ENCODE measurements at regions of chr9 and their contacts with region 1.

Region 1: DNA sequence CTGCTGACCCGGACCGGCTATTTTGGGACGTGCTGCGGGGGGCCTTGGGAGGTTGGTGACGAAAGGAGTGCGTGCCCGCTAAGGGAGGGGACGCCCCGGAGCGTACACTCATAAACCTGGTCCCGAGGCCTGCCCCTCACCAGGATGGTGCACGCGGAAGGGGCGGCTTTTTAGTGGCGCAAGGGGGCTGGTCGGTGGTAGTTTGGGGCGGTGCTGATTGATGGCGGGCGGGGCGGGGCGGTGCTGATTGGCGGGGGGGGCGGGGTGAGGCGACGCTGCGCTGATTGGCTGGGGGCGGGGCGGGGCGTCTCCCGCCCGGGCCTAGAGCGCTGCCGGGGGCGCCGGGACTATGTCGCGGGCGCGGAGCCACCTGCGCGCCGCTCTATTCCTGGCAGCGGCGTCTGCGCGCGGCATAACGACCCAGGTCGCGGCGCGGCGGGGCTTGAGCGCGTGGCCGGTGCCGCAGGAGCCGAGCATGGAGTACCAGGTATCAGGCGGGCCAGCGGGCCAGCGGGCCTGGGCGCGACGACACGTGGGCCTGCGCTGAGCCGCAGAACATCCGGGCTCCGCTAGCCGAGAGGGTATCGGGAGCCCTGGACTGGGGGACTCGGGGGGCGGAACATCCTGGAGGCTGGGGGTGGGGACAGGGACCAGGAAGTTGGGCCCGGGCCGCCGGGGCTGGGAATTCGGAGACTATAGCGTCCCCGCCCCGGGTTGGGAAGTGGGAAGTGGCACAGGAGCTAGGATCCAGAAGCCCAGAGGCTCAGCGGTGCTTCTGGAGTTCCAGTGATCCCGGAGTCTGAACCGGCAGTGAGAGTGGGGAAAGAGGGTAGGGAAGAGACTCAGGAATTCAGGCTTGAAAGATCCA is at the start of gene FPGS:
- DNase-seq: peak; percentile 94
- H3K4me3 Mint-ChIP-seq: peak within 1 kb of the TSS; percentile 99
- H3K27ac Mint-ChIP-seq: peak within 1 kb of the TSS; percentile 97
- H3K4me1 Mint-ChIP-seq: peaks cover 25% of the 10 kb centered on the region
- H3K27me3 Mint-ChIP-seq: no peaks in the 10 kb centered on the region
- total RNA-seq, gene FPGS: 126 and 128 TPM in 2 replicates

Region 2: DNA sequence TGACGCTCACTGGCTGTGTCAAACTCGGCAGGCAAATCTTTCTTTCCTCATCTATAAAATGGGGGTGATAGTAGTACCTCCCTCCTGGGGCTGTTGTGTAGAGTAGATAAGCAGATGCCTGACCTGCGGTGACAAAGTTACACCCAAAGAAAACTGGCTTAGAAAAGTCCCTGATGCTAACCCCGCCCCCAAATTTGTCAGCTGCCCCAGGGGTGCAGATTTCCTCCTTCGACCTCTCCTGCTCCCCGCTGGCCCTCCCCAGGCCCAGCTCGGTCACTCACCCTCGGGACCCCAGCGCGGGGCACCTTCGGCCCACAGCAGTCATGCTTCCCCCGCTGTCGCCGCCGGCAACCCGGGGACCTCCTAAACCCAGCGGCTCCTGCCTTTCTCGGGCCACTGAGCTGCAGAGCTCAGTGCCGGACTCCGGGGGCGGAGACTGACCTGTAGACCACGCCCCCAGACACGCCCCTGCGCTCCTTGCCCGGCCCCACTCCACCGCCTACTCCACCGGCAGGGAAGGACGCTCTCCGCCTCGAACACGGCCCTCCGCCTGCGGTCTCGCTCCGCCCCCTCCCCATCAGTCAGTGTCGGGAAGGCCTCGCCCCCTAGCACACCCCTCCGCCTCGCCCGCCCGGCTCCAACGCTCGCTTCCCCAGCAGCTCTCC is 31.8 kb before region 1 on chr9:
- intact Hi-C with region 1: loop called (anchors 2 kb)
- DNase-seq: peak; percentile 99
- H3K4me3 Mint-ChIP-seq: peak overlapping the region; percentile 93
- H3K27ac Mint-ChIP-seq: peak overlapping the region; percentile 94
- H3K4me1 Mint-ChIP-seq: peaks cover 58% of the 10 kb centered on the region
- H3K27me3 Mint-ChIP-seq: no peaks in the 10 kb centered on the region

Region 3: DNA sequence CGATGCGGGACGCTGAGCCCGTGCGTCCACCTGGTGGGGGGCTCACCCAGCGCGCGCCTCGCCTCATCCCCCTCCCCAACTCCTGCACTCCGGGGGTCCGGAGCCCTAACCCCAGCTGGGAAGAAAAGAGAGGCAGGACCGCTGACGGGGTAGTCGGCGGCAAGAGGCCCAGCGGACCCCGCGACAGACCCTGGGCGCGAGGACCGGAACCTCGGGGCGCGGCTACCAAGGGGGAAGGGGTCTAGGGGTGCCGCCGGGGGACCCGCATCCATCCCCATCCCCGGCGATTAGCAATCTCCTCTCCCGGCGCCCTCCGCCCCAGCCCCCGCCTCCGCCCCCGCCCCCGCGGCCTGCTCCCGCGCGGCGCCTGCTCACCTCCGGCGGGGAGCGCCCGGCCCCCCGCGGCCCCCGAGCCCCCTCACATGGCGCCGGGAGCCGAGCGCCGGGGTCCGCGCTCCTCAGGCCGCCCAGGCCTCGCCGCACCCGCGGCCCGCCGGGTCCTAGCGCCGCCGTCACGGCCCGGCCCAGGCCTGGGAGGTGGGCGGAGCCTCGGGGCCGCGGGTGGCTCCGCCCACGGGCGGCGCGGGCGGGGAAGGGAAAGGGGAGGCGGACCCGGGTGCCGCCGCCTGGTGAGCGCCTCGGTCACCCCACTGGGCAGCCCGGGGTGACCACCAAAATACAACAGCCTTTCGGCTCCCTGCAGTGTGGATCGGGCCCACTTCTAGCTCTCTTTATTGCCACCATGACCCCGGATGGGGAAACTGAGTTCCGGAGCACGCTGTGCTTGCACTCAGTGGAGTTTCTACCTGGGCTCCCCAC is 96.5 kb after region 1 on chr9 and contains the start of gene ST6GALNAC6:
- intact Hi-C with region 1: no loop called
- DNase-seq: peak; percentile 94
- H3K4me3 Mint-ChIP-seq: peak within 1 kb of the TSS; percentile 87
- H3K27ac Mint-ChIP-seq: peak within 1 kb of the TSS; percentile 87
- H3K4me1 Mint-ChIP-seq: peaks cover 31% of the 10 kb centered on the region
- H3K27me3 Mint-ChIP-seq: no peaks in the 10 kb centered on the region
- total RNA-seq, gene ST6GALNAC6: 53.3 and 61.2 TPM in 2 replicates

Measured in activated CD4-positive, alpha-beta T cell treated with anti-CD3 and anti-CD28 coated beads, Interleukin-2, amount 10 ng/mL, durations not matched to agents 24 days and 14 days (primary cell).